Mammary epithelial cell (primary cell): ENCODE measurements at regions of chr5 and their contacts with region 1.

Region 1: GRCh38 chr5:180071531-180072255 is at the start of gene RNF130:
- DNase-seq: peak; percentile 90
- H3K4me3 ChIP-seq: peak within 1 kb of the TSS; percentile 62 to 94 (median 89)
- H3K27ac ChIP-seq: peak within 1 kb of the TSS; percentile 47
- H3K4me1 ChIP-seq: peaks cover 16% of the 10 kb centered on the region
- H3K27me3 ChIP-seq: no peaks in the 10 kb centered on the region
- CTCF ChIP-seq: no peak
- total RNA-seq, gene RNF130: 13.3 to 18.4 TPM

Region 2: DNA sequence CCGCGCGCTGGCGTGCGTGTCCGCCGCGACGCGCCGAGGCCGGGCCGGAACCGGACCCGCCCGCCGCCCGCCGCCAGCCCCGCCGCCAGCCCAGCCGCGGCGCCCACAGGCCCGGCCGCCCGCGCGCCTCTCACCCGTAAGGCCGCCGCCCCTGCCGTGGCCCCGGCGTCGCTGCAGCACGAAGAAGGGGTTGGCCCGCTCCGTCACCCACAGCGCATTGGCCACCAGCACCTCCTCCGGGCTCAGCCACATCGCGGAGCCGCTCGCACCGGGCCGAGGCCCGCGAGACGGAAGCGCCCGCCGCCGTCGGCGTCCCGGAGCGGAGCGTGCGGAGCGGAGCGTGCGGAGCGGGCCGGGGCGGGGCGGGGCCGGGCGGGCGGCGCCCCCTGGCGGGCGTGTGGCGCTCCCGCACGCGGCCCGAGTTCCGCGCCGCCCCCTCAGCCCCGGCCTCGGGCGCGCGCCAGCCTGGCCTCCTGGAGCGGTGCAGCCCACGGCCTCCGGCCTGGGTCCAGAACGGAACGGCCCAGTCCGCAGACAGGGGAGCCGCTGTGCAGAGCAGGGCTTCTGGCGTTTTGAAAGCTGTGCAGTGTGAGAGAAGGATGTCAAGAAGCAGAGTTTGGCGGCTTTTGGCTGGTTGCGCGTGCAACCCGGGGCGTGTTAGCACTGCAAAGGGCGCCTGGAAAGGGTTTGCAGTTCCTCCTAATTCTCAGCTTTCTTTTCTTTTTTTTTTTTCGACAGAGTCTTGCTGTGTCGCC is 163.9 kb before region 1 on chr5 and contains the start of gene TBC1D9B:
- CTCF ChIA-PET with region 1: no interaction called
- dilution Hi-C with region 1: no loop called
- in situ Hi-C with region 1: no loop called
- intact Hi-C with region 1: loop called (anchors 5 kb)
- DNase-seq: peak; percentile 60
- H3K4me3 ChIP-seq: peak within 1 kb of the TSS; percentile 82 to 94 (median 91)
- H3K27ac ChIP-seq: peak within 1 kb of the TSS; percentile 44
- H3K4me1 ChIP-seq: peaks cover 13% of the 10 kb centered on the region
- H3K27me3 ChIP-seq: no peaks in the 10 kb centered on the region
- CTCF ChIP-seq: peak; percentile 23 to 24
- total RNA-seq, gene TBC1D9B: 71.0 to 112 TPM

Region 3: GRCh38 chr5:180026320-180026719 is 45.4 kb before region 1 on chr5:
- CTCF ChIA-PET with region 1: no interaction called
- dilution Hi-C with region 1: loop called (anchors 5 kb)
- in situ Hi-C with region 1: no loop called
- intact Hi-C with region 1: no loop called
- DNase-seq: peak; percentile 72
- H3K4me3 ChIP-seq: no peak overlapping the region
- H3K27ac ChIP-seq: no peak overlapping the region
- H3K4me1 ChIP-seq: no peaks in the 10 kb centered on the region
- H3K27me3 ChIP-seq: no peaks in the 10 kb centered on the region
- CTCF ChIP-seq: no peak

Region 4: GRCh38 chr5:180056153-180056552 is 15.5 kb before region 1 on chr5:
- CTCF ChIA-PET with region 1: no interaction called
- dilution Hi-C with region 1: no loop called
- in situ Hi-C with region 1: no loop called
- intact Hi-C with region 1: loop called (anchors 1 kb)
- DNase-seq: no peak
- H3K4me3 ChIP-seq: no peak overlapping the region
- H3K27ac ChIP-seq: peak overlapping the region; percentile 43
- H3K4me1 ChIP-seq: peaks cover 10% of the 10 kb centered on the region
- H3K27me3 ChIP-seq: no peaks in the 10 kb centered on the region
- CTCF ChIP-seq: no peak